Mucosa of descending colon (tissue), 3 donors: ENCODE measurements at regions of chr12 and their contacts with region 1.

Region 1: GRCh38 chr12:75526655-75527511 is 15.5 kb upstream of the KRR1 start:
- DNase-seq: peak in 2 of 3 donors; percentile 8 to 23
- ATAC-seq: peak; percentile 48
- H3K4me3 ChIP-seq: no peak overlapping the region
- H3K4me1 ChIP-seq: no peaks in the 10 kb centered on the region
- CTCF ChIP-seq: peak; percentile 35

Region 2: DNA sequence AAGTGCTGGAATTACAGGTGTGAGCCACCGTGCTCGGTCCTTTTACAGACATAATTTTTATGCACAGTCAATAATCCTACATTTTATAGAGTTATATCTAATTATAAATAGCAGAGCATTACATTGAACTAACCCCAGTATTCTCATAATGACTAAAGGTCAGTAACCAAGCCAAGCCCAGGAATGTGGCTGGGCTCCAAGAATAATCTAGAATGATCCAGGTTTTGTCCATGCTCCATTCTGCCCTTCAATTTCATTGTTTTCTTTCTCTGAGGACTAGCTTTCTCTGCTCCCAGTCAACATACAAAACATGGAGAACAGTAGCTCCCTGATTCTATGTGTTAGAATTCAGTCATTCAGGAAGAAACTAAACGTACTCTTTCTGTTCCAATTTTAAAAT is 76.6 kb after region 1 on chr12:
- intact Hi-C with region 1: no loop called
- DNase-seq: no peak
- ATAC-seq: no peak
- H3K4me3 ChIP-seq: no peak overlapping the region
- H3K4me1 ChIP-seq: no peaks in the 10 kb centered on the region
- CTCF ChIP-seq: no peak

Region 3: GRCh38 chr12:76031537-76032073 is 504.7 kb after region 1 on chr12 and contains the start of gene PHLDA1:
- intact Hi-C with region 1: loop called (anchors 5 to 10 kb)
- DNase-seq: peak; percentile 88 to 95 (median 92)
- ATAC-seq: peak; percentile 90
- H3K4me3 ChIP-seq: peak within 1 kb of the TSS; percentile 47
- H3K4me1 ChIP-seq: peaks cover 3% of the 10 kb centered on the region
- CTCF ChIP-seq: peak; percentile 37
- total RNA-seq, gene PHLDA1: 2.2 to 8.8 (median 3.5) TPM

Region 4: DNA sequence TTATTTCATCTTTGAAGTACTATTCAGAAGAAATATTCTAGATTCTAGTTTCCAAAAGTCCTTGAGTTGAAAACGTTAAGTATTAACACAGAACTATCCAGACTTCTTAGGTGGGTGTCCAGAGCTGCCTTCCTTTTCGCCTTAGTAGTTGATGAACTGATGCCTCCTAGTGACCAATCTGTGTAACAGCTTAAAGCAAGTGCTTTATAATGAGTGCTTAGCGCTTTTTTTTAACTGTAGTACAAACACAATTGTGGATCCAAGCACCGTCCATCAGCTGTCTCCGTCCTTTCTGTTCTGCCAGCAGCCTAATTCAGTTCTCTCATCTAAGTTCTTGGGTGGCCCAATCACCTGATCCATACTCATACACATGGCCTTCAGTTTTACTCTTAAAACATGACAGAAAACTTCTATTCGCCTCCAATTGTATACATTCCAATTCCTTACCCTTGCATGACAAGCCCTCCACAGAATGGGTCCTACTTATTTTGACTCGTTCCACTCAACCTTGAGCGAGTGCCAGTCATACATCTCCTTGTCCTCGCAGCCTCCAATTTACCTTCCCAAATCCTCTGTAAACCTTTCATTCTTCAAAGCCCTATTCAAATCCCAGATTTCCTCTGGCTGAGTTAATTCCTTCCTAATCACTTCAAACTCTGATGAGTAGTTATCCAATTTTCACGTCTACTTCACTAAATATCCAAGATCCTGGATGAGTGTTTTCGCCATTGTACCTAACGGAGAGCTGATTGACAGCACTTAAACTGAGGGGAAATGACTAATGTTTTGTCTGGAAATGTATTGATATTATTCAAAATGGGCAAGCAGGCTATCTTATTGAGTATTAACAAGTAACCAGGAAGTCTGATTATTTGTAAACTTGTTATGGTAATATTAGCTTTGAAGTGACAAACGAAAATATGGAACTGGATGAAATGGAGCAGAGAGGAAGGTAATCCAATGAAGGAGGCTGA is 510.5 kb after region 1 on chr12:
- intact Hi-C with region 1: loop called (anchors 5 to 10 kb)
- DNase-seq: peak in 1 of 3 donors; percentile 48
- ATAC-seq: peak; percentile 80
- H3K4me3 ChIP-seq: no peak overlapping the region
- H3K4me1 ChIP-seq: peaks cover 6% of the 10 kb centered on the region
- CTCF ChIP-seq: peak; percentile 59